Dendritic cell treated with granulocyte-macrophage colony-stimulating factor and Interleukin-4, amounts not matched to agents 40 ng/mL and 50 ng/mL, for 4 days (primary cell): ENCODE measurements at regions of chr20 and their contacts with region 1.

Region 1: DNA sequence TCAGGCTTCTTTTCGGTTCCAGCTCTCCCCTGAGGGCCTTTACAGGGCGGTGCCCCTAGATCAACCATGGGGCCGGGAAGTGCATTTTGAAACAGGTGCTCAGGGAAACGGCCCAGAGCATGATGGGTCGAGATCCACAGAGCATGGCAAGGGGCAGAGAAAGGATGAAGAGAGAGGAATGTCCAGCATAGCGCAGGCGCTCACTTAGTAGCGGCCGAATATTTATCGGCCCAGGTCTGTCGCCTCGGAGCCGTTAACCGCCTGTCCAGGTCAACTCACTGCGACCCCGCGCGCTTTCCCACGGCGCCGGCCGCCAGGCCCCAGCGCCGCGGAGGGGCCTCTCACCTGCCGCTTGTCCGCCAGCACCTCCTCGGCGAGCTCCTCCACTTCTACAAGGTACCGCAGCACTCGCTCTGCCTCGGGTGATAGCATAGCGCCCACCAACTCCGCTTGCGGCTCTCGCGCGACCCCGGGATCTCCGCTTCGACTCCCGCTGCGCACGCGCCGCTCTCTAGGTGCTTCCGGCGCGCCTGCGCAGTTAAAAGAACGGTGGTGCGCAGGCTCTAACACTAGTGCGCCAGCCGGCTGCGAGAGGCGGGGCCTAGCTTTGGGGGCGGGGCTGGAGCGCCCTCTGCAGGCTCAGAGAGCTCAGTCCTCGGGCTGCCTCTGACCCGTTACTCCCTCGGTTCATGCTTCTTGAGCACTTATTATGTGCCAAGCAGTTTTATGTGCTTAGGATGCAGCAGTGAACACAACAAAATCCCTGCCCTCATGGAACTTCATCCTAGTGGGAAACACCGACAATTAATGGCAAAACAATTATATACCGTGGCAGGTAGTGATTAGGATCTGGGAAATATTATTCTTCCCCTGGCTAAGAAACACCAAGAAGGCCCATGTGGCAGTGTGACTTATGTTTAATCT is at the start of gene PDRG1:
- H3K4me3 Mint-ChIP-seq: peak within 1 kb of the TSS; percentile 93
- H3K27ac Mint-ChIP-seq: peak within 1 kb of the TSS; percentile 92
- H3K4me1 Mint-ChIP-seq: peaks cover 43% of the 10 kb centered on the region
- H3K27me3 Mint-ChIP-seq: peaks cover 25% of the 10 kb centered on the region

Region 2: DNA sequence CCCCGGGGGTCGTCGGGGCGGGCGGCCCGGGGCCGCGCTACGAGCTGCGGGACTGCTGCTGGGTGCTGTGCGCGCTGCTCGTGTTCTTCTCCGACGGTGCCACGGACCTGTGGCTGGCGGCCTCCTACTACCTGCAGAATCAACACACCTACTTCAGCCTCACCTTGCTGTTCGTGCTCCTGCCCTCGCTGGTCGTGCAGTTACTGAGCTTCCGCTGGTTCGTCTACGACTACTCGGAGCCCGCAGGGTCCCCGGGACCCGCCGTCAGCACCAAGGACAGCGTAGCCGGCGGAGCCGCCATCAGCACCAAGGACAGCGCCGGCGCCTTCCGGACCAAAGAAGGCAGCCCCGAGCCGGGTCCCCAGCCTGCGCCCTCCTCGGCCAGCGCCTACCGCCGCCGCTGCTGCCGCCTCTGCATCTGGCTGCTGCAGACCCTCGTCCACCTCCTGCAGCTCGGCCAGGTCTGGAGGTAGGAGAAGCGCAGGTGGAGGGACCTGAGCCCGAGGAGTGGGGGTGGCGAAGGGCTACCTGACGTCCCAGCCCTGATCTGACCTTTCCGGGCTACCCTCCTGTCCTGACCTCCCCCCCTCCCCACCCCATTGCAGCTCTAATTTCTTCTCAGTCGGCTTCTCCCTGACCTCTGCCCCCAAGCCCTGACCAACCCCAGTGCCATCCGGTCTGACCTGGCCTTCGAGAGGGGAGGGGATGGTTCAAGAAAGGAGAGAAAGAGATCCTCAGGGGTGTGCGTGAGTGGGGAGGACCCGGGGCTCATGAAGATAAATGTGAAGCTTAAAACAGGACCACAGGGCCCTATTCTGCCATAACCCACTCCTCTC is 16.7 kb after region 1 on chr20:
- intact Hi-C with region 1: loop called (anchors 1 kb)
- H3K4me3 Mint-ChIP-seq: peak overlapping the region; percentile 89
- H3K27ac Mint-ChIP-seq: no peak overlapping the region
- H3K4me1 Mint-ChIP-seq: peaks cover 18% of the 10 kb centered on the region
- H3K27me3 Mint-ChIP-seq: peaks cover 60% of the 10 kb centered on the region